Activated CD4-positive, alpha-beta T cell treated with anti-CD3 and anti-CD28 coated beads, Interleukin-2, amount 10 ng/mL, durations not matched to agents 24 days and 14 days (primary cell): ENCODE measurements at regions of chr6 and their contacts with region 1.

Region 1: DNA sequence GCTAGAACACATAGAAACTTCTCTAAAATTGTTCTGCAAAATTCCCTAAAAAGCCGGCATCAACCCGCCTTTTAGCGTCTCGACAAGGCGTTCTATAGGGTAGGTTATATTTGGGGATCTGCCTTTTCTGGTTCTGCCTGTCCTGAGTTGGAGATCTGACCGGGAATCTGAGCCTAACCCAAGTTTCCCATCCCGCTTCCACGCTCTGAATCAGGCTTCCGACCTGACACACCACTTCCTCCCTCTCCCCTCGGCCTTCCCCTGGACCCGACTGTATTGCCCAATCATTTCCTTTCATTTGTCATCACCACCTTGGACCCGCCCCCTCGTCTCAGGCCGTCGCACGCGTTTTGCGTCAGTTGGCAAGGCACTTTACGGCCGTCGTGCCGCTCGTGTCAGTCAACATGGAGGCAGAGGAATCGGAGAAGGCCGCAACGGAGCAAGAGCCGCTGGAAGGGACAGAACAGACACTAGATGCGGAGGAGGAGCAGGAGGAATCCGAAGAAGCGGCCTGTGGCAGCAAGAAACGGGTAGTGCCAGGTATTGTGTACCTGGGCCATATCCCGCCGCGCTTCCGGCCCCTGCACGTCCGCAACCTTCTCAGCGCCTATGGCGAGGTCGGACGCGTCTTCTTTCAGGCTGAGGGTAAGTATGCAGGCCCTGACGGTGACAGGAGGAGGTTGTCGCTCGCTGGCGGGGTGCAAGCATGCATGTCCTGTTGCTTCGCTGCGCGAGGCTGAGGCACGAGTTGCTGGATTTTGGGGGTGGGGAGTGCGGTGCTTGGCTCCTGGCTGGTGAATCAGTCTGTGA is at the start of gene ABT1:
- DNase-seq: peak; percentile 99
- H3K4me3 Mint-ChIP-seq: no peak within 1 kb of the TSS
- H3K27ac Mint-ChIP-seq: no peak within 1 kb of the TSS
- H3K4me1 Mint-ChIP-seq: peaks cover 32% of the 10 kb centered on the region
- H3K27me3 Mint-ChIP-seq: peaks cover 28% of the 10 kb centered on the region
- total RNA-seq, gene ABT1: 31.9 and 32.1 TPM in 2 replicates

Region 2: GRCh38 chr6:26342106-26343004 is 254.4 kb before region 1 on chr6:
- intact Hi-C with region 1: loop called (anchors 1 kb)
- DNase-seq: peak; percentile 71
- H3K4me3 Mint-ChIP-seq: peak overlapping the region; percentile 92
- H3K27ac Mint-ChIP-seq: peak overlapping the region; percentile 84
- H3K4me1 Mint-ChIP-seq: peaks cover 16% of the 10 kb centered on the region
- H3K27me3 Mint-ChIP-seq: peaks cover 5% of the 10 kb centered on the region

Region 3: DNA sequence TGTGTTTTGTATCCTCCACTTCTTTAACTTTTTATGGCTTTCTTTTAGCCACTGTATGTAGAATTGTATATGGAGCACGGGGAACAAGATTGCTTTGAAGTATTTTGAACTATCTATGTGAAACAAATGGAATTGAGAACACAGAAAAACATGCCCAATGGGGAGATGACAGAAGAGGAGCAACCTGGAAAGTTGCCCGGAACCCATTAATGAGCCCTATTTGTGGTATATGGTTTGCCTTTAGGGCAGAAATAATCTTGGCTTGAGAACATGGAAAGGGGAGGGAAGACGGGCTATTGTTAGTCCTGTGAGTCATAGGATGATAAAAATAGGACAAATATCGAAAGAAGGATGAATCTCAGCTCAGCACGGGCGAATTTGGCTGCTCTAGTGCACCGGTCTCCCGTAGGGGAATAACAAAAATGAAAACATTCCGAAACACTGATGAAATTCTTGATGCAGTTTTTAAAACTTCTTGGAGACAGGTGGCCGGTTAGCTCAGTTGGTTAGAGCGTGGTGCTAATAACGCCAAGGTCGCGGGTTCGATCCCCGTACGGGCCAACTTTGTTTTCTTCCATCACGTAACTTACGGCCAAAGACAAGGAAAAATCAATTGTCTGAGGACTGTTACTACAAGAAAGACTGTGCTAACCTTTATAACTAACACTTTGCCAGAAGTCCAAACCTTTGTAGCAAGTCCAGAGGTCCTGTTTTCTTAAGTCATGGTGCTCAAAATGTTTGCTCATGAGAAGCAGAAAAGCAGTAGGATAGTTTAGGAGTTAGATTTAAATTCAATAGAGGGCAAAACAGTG is 42.9 kb before region 1 on chr6:
- intact Hi-C with region 1: loop called (anchors 1 kb)
- DNase-seq: peak; percentile 94
- H3K4me3 Mint-ChIP-seq: no peak overlapping the region
- H3K27ac Mint-ChIP-seq: no peak overlapping the region
- H3K4me1 Mint-ChIP-seq: peaks cover 22% of the 10 kb centered on the region
- H3K27me3 Mint-ChIP-seq: peaks cover 2% of the 10 kb centered on the region

Region 4: GRCh38 chr6:26576929-26577719 is 19.7 kb before region 1 on chr6:
- intact Hi-C with region 1: loop called (anchors 1 kb)
- DNase-seq: peak; percentile 85
- H3K4me3 Mint-ChIP-seq: peak overlapping the region; percentile 88
- H3K27ac Mint-ChIP-seq: peak overlapping the region; percentile 83
- H3K4me1 Mint-ChIP-seq: peaks cover 22% of the 10 kb centered on the region
- H3K27me3 Mint-ChIP-seq: peaks cover 19% of the 10 kb centered on the region

Region 5: GRCh38 chr6:26607434-26608230 is 10.8 kb after region 1 on chr6:
- intact Hi-C with region 1: no loop called
- DNase-seq: peak; percentile 91
- H3K4me3 Mint-ChIP-seq: peak overlapping the region; percentile 12
- H3K27ac Mint-ChIP-seq: no peak overlapping the region
- H3K4me1 Mint-ChIP-seq: peaks cover 12% of the 10 kb centered on the region
- H3K27me3 Mint-ChIP-seq: peaks cover 16% of the 10 kb centered on the region

Region 6: GRCh38 chr6:26651133-26651781 is 54.5 kb after region 1 on chr6:
- intact Hi-C with region 1: no loop called
- DNase-seq: no peak
- H3K4me3 Mint-ChIP-seq: no peak overlapping the region
- H3K27ac Mint-ChIP-seq: no peak overlapping the region
- H3K4me1 Mint-ChIP-seq: no peaks in the 10 kb centered on the region
- H3K27me3 Mint-ChIP-seq: no peaks in the 10 kb centered on the region